ENCODE measurements at regions of chr7 and their contacts with region 1.

Region 1: DNA sequence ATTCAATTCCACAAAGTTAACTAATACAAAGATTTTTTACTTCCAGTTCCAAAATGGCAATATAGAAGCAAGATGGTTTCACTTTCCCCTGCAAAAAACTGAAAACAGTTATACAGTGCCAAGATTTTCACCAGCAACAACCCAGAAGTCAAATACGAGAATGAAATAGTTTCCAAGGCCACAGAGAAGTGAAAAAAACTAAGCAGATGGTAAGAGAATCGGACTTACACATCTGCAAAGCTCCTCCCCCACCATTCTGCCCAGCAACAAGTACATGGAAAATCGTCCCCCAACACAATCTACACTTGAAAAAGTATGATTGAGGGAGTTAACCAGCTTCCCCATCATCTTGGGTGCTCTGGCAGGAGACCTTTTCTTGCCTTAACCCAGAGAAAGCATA is 30.3 kb upstream of the KEL start:
- DNase-seq: no peak
- ATAC-seq: no peak
- H3K4me3 ChIP-seq: no peak overlapping the region
- H3K27ac ChIP-seq: no peak overlapping the region
- H3K4me1 ChIP-seq: no peaks in the 10 kb centered on the region
- H3K27me3 ChIP-seq: peaks cover 0 to 3% of the 10 kb centered on the region in 2 donors
- CTCF ChIP-seq: no peak
- POLR2A ChIP-seq: no peak

Region 2: GRCh38 chr7:142873281-142873787 is 119.1 kb before region 1 on chr7:
- intact Hi-C with region 1: loop called (anchors 10 kb)
- DNase-seq: peak in 3 of 4 donors; percentile 44 to 53 (median 49)
- ATAC-seq: peak; percentile 31
- H3K4me3 ChIP-seq: no peak overlapping the region
- H3K27ac ChIP-seq: no peak overlapping the region
- H3K4me1 ChIP-seq: peaks cover 4% of the 10 kb centered on the region
- H3K27me3 ChIP-seq: no peaks in the 10 kb centered on the region
- CTCF ChIP-seq: peak in 6 of 7 experiments; percentile 37 to 57 (median 47)
- POLR2A ChIP-seq: no peak

Measured in body of pancreas (tissue), 4 donors.